ENCODE measurements at regions of chr1 and their contacts with region 1.

Region 1: DNA sequence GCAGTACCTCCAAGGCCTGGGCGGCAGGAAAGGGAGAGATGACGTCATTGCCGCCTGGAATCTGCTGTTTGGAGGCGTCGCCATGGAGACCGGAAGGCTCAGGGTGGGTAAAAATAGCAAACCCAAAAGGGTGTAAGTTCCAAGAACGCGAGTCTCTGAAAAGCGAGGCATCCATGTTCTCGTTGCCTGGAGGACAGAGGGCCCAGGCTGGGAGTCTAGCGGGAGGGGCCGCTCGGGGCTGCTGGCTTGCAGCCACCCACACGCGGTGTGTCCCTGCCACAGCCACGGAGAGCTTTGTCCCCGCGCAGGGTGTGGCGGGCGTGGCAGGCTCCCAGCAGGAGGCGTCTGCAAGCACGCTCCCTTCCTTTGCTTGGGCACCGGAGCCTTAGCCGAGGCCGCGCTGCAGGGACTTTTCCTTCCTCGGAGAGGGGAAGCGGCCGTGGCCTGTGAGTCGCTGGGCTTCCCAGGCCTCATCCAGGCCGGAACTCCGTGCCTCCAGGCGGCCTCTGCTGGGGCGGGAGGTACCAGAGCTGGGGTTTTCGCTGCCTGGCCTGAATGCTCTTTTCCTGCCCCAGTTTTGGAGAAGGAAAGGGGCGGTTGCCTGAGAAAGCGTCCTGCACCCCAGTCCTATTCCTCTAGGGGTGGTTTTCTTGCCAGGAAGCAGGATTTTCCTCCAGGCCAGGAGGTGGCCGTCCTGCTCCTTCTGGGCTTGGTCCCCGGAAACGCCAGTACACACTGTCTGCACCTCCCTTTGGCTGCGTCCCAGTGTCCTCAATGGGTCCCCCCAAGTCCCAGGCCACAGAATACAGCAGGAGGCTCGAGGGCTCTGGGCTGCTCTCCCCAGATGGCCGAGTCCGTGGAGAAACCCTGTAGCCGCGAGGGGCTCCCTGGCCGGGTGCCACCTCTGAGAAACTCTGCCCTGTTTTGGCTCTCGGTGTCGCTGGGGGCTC is 15.3 kb upstream of the SKI start:
- DNase-seq: peak; percentile 93

Region 2: DNA sequence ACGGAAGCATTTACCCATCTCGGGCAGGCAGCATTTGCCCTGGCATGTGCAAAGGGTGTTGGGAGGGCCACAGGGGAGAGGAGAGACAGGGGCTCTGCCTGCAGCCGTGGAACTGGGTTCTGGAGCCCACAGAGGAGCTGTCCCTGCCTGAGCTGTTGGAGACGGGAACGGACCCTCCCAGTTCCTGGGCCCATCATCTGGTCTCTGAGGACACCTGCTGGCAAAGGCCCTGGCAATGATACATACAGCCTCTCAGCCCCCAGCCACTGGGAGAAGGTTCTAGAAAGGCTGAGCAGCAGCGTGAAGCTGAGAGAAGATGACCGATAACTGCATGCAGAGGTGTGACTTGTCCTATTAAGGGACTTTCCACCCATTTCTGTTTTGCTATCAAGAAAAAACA is 49.6 kb before region 1 on chr1:
- intact Hi-C with region 1: no loop called
- DNase-seq: no peak

Region 3: GRCh38 chr1:2227346-2228153 is 14.7 kb after region 1 on chr1:
- intact Hi-C with region 1: loop called (anchors 2 kb)
- DNase-seq: peak; percentile 98

Region 4: GRCh38 chr1:2279210-2279639 is 66.4 kb after region 1 on chr1:
- intact Hi-C with region 1: loop called (anchors 5 kb)
- DNase-seq: no peak

Region 5: DNA sequence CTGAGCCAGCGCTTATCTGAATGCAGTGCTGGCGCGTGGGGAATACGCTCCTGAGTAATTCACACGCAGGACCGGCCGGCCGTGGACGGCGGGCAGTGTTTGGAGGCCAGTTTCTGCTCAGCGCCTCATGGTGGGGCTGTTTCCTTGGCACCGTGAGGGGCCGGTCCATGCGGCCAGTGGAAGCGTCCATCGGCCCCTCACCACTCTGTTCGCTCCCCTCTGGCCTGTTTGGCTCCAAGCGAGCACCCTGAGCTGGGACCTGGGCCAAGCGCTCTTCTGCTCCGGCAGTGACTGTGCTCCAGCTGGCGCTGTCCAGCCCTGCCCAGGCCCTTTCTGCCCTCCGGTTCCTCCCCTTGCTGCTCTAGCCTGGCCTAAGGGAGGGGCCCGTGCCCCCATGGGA is 246.9 kb after region 1 on chr1:
- intact Hi-C with region 1: no loop called
- DNase-seq: no peak

Measured in cardiac septum (tissue), 1 donor.